GM12878 (cell line): ENCODE measurements at regions of chr6 and their contacts with region 1.

Region 1: GRCh38 chr6:96626759-96627364 is 63.9 kb downstream of the FHL5 start:
- DNase-seq: peak; percentile 49
- ATAC-seq: peak; percentile 93
- H3K4me3 ChIP-seq: no peak overlapping the region
- H3K27ac ChIP-seq: no peak overlapping the region
- H3K4me1 ChIP-seq: peaks cover 3% of the 10 kb centered on the region
- H3K27me3 ChIP-seq: no peaks in the 10 kb centered on the region
- CTCF ChIP-seq: peak in 2 of 3 experiments; percentile 42 to 64; a peak in 5 of 6 replicates
- EP300 ChIP-seq: no peak
- POLR2A ChIP-seq: no peak
- RAD21 ChIP-seq: peak; percentile 80

Region 2: GRCh38 chr6:96542702-96543101 is 84.2 kb before region 1 on chr6:
- CTCF ChIA-PET with region 1: interaction called, 4 read pairs
- POLR2A ChIA-PET with region 1: no interaction called
- RAD21 ChIA-PET with region 1: interaction called, 13 read pairs
- SMC1A ChIA-PET with region 1: interaction called, 7 read pairs
- in situ Hi-C with region 1: no loop called
- intact Hi-C with region 1: loop called (anchors 5 kb)
- DNase-seq: no peak
- ATAC-seq: peak; percentile 79
- H3K4me3 ChIP-seq: no peak overlapping the region
- H3K27ac ChIP-seq: no peak overlapping the region
- H3K4me1 ChIP-seq: no peaks in the 10 kb centered on the region
- H3K27me3 ChIP-seq: no peaks in the 10 kb centered on the region
- CTCF ChIP-seq: peak; percentile 26 to 45 (median 31); a peak in 4 of 6 replicates
- EP300 ChIP-seq: no peak
- POLR2A ChIP-seq: no peak
- RAD21 ChIP-seq: peak; percentile 61

Region 3: DNA sequence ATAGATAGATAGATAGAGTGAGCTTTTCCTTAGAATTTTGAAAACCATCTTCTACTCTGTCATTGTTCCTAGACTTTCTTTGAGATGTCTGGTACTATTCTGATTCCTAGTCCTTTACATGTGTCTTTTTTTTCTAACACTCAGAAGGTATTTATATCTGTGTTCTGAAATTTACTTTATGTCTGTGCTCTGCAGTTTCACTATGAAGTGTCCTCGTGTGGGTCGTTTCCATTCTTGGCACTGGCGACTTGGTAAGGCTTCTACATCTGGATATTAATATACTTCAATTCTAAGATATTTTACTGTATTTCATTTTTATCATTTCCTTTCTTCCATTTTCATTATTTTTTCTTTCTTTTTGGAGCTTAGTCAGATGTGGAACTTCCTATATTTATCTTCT is 23.1 kb after region 1 on chr6:
- CTCF ChIA-PET with region 1: interaction called, 16 read pairs
- POLR2A ChIA-PET with region 1: no interaction called
- RAD21 ChIA-PET with region 1: interaction called, 7 read pairs
- SMC1A ChIA-PET with region 1: interaction called, 8 read pairs
- in situ Hi-C with region 1: no loop called
- intact Hi-C with region 1: no loop called
- DNase-seq: no peak
- ATAC-seq: peak; percentile 77
- H3K4me3 ChIP-seq: no peak overlapping the region
- H3K27ac ChIP-seq: no peak overlapping the region
- H3K4me1 ChIP-seq: peaks cover 7% of the 10 kb centered on the region
- H3K27me3 ChIP-seq: no peaks in the 10 kb centered on the region
- CTCF ChIP-seq: no peak
- EP300 ChIP-seq: no peak
- POLR2A ChIP-seq: no peak
- RAD21 ChIP-seq: no peak

Region 4: GRCh38 chr6:96760153-96760687 is 133.4 kb after region 1 on chr6:
- CTCF ChIA-PET with region 1: interaction called, 8 read pairs
- POLR2A ChIA-PET with region 1: no interaction called
- RAD21 ChIA-PET with region 1: interaction called, 12 read pairs
- SMC1A ChIA-PET with region 1: interaction called, 6 read pairs
- in situ Hi-C with region 1: no loop called
- intact Hi-C with region 1: loop called (anchors 5 kb)
- DNase-seq: no peak
- ATAC-seq: peak; percentile 51
- H3K4me3 ChIP-seq: no peak overlapping the region
- H3K27ac ChIP-seq: no peak overlapping the region
- H3K4me1 ChIP-seq: no peaks in the 10 kb centered on the region
- H3K27me3 ChIP-seq: no peaks in the 10 kb centered on the region
- CTCF ChIP-seq: peak in 1 of 3 experiments; percentile 27; a peak in 1 of 6 replicates
- EP300 ChIP-seq: no peak
- POLR2A ChIP-seq: no peak
- RAD21 ChIP-seq: 0 out of 2 replicates have a peak, but pooled peaks have one; percentile 22

Region 5: GRCh38 chr6:96837081-96837971 is 210.5 kb after region 1 on chr6 and contains the start of gene GPR63:
- CTCF ChIA-PET with region 1: interaction called, 5 read pairs
- POLR2A ChIA-PET with region 1: no interaction called
- RAD21 ChIA-PET with region 1: no interaction called
- SMC1A ChIA-PET with region 1: no interaction called
- in situ Hi-C with region 1: no loop called
- intact Hi-C with region 1: loop called (anchors 2 kb)
- DNase-seq: peak; percentile 50
- ATAC-seq: peak; percentile 92
- H3K4me3 ChIP-seq: peak within 1 kb of the TSS; percentile 92
- H3K27ac ChIP-seq: peak within 1 kb of the TSS; percentile 62
- H3K4me1 ChIP-seq: no peaks in the 10 kb centered on the region; the same call in 1 of the 2 replicates
- H3K27me3 ChIP-seq: no peaks in the 10 kb centered on the region; a peak in 1 of 4 replicates
- CTCF ChIP-seq: 0 out of 6 replicates have a peak, but pooled peaks of 1 of the 3 experiments have one; percentile 5
- EP300 ChIP-seq: no peak; a peak in 1 of 4 replicates
- POLR2A ChIP-seq: peak; percentile 86
- RAD21 ChIP-seq: no peak
- polyA plus RNA-seq, gene GPR63: 1.6 to 1.7 TPM

Region 6: DNA sequence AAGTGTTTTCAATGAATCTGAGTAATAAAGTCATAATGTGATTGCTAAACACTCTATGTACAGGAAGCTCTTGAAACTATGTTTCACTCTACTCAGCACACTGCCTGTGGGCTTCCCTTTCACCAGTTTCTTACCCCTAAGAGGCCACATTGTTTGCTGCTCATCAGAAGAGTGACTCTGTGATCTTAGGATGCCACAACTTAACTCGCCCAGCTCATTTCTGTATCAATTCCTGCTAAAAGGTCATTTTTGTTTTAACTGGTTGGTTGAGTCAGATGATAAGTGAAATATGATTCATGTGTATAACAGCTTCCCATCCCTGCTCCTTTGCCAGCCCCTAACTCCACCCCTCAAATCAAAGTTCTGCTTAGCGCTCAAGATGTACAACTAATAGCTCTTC is 280.6 kb after region 1 on chr6:
- CTCF ChIA-PET with region 1: no interaction called
- POLR2A ChIA-PET with region 1: no interaction called
- RAD21 ChIA-PET with region 1: interaction called, 6 read pairs
- SMC1A ChIA-PET with region 1: interaction called, 14 read pairs
- in situ Hi-C with region 1: no loop called
- intact Hi-C with region 1: no loop called
- DNase-seq: peak; percentile 44
- ATAC-seq: peak; percentile 97
- H3K4me3 ChIP-seq: no peak overlapping the region
- H3K27ac ChIP-seq: no peak overlapping the region
- H3K4me1 ChIP-seq: no peaks in the 10 kb centered on the region
- H3K27me3 ChIP-seq: peaks cover 0 to 1% of the 10 kb centered on the region in 2 experiments; a peak in 1 of 4 replicates
- CTCF ChIP-seq: no peak
- EP300 ChIP-seq: no peak
- POLR2A ChIP-seq: no peak
- RAD21 ChIP-seq: no peak

Region 7: GRCh38 chr6:97059473-97059872 is 432.6 kb after region 1 on chr6:
- CTCF ChIA-PET with region 1: interaction called, 42 read pairs
- POLR2A ChIA-PET with region 1: no interaction called
- RAD21 ChIA-PET with region 1: interaction called, 64 read pairs
- SMC1A ChIA-PET with region 1: interaction called, 86 read pairs
- in situ Hi-C with region 1: loop called (anchors 5 kb)
- intact Hi-C with region 1: loop called (anchors 1 kb)
- DNase-seq: peak; percentile 17
- ATAC-seq: peak; percentile 92
- H3K4me3 ChIP-seq: no peak overlapping the region
- H3K27ac ChIP-seq: no peak overlapping the region
- H3K4me1 ChIP-seq: no peaks in the 10 kb centered on the region
- H3K27me3 ChIP-seq: no peaks in the 10 kb centered on the region; a peak in 1 of 4 replicates
- CTCF ChIP-seq: peak; percentile 41 to 63 (median 50); a peak in 5 of 6 replicates
- EP300 ChIP-seq: no peak
- POLR2A ChIP-seq: no peak
- RAD21 ChIP-seq: peak; percentile 80